H1 (cell line): ENCODE measurements at regions of chr1 and their contacts with region 1.

Region 1: GRCh38 chr1:19762175-19762779 is 37.4 kb downstream of the TMCO4 start:
- DNase-seq: peak in 1 of 2 experiments; percentile 84
- H3K4me3 ChIP-seq: no peak overlapping the region
- H3K27ac ChIP-seq: no peak overlapping the region
- H3K4me1 ChIP-seq: no peaks in the 10 kb centered on the region
- H3K27me3 ChIP-seq: no peaks in the 10 kb centered on the region
- CTCF ChIP-seq: peak; percentile 86 to 93 (median 92)
- EP300 ChIP-seq: no peak
- POLR2A ChIP-seq: no peak
- RAD21 ChIP-seq: peak; percentile 86 to 89

Region 2: GRCh38 chr1:19704247-19705113 is 57.8 kb before region 1 on chr1:
- CTCF ChIA-PET with region 1: interaction called, 11 read pairs
- POLR2A ChIA-PET with region 1: no interaction called
- DNase-seq: peak; percentile 69 to 95
- H3K4me3 ChIP-seq: peak overlapping the region in 1 of 4 experiments; percentile 41; a peak in 2 of 8 replicates
- H3K27ac ChIP-seq: no peak overlapping the region
- H3K4me1 ChIP-seq: peaks cover 0 to 8% (median 3%) of the 10 kb centered on the region in 4 experiments; a peak in 5 of 7 replicates
- H3K27me3 ChIP-seq: no peaks in the 10 kb centered on the region
- CTCF ChIP-seq: peak; percentile 92 to 95 (median 94)
- EP300 ChIP-seq: no peak
- POLR2A ChIP-seq: no peak
- RAD21 ChIP-seq: peak; percentile 66 to 78

Region 3: DNA sequence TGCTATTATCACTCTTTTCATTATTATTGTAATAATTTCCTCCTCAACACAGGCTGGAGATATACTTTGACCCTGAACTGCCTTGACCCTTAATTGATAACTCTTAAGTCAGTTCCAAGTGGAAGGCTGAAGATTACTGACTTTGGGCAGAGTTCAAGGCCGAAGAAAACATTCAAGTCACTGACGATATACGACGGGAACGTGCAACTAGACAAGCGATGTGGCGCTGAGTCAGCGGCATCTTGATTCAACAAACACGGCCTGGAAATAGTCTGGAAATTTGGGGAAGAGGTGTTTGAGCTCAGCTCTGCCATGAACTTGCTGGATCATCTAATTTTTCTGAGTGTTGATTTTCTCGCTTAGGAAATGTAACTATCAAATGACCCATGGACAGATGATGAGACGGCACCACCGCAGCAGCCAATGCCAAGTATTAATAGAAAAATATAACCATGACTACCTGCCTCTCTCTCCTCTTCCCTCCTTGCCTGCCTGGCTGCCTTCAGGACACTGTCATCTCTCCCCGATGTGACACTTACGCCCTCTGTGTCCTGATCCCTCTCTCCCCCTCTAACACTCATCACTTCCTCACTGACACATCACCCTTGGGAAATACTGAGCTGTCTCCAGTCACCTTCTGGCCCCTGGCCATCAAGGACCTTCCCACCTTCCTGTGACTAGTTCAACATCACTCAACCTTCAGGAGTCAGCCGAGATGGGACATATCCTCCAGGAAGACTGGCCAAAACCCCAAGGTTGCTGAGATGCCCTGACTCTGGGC is 12.0 kb before region 1 on chr1:
- CTCF ChIA-PET with region 1: interaction called, 11 read pairs
- POLR2A ChIA-PET with region 1: no interaction called
- DNase-seq: no peak
- H3K4me3 ChIP-seq: no peak overlapping the region
- H3K27ac ChIP-seq: no peak overlapping the region
- H3K4me1 ChIP-seq: no peaks in the 10 kb centered on the region
- H3K27me3 ChIP-seq: no peaks in the 10 kb centered on the region
- CTCF ChIP-seq: no peak
- EP300 ChIP-seq: no peak
- POLR2A ChIP-seq: no peak
- RAD21 ChIP-seq: no peak

Region 4: DNA sequence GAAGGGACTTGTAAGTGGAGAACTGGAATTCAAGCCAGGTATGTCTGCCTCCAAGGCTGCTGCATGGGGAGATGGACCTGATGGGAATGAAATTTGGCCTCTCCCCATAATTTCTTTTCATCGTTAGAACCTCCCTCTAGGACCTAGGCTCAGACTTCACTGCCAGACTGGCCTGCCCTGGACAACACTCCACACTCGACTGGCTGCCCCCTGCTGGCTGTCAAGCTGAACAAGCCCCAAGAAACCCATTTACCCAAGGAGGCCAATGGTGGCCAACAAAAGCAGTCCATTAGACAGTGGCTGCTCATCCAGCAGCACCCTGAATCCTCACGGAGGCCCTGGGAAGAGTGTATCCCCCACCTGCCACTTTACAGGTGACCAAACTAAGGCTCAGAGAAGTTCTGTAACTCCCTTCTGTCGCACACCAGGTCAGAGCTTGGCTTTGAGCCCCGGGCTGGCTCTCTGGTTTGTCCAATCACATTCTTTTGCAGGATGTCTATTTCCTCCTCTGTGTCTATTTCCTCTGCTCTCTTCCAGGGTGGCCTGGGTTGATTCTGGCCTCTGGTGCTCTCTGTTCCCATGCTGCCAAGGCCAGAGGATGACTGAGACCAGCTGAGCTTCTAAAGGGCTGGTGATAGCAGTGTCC is 49.1 kb after region 1 on chr1:
- CTCF ChIA-PET with region 1: interaction called, 14 read pairs
- POLR2A ChIA-PET with region 1: interaction called, 3 read pairs
- DNase-seq: peak in 1 of 2 experiments; percentile 75
- H3K4me3 ChIP-seq: no peak overlapping the region
- H3K27ac ChIP-seq: no peak overlapping the region
- H3K4me1 ChIP-seq: peaks cover 6 to 9% (median 7%) of the 10 kb centered on the region in 4 experiments
- H3K27me3 ChIP-seq: no peaks in the 10 kb centered on the region
- CTCF ChIP-seq: peak; percentile 81 to 84 (median 81)
- EP300 ChIP-seq: no peak
- POLR2A ChIP-seq: no peak
- RAD21 ChIP-seq: peak; percentile 55 to 75

Region 5: DNA sequence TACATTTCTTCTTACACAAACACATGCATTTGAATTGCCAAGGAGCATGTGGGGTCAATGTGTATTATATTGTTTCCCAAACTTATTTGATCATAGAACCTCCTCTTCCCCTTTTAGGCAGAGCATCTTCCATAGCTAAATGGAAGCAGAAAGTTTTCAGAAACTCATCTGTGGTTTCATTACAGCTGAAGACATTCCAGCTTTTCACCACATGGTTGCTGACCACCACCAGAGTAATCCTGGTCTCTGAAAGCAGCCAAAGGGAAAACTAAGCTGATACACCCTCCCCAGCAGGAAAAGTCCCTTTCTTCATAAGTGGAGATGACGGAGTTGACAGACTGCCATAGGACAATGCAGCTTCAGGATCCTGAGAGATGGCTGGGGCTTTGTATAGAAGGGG is 89.8 kb after region 1 on chr1:
- CTCF ChIA-PET with region 1: no interaction called
- POLR2A ChIA-PET with region 1: no interaction called
- DNase-seq: no peak
- H3K4me3 ChIP-seq: no peak overlapping the region
- H3K27ac ChIP-seq: no peak overlapping the region
- H3K4me1 ChIP-seq: no peaks in the 10 kb centered on the region
- H3K27me3 ChIP-seq: peaks cover 0 to 2% (median 0%) of the 10 kb centered on the region in 4 experiments; a peak in 2 of 7 replicates
- CTCF ChIP-seq: no peak
- EP300 ChIP-seq: no peak
- POLR2A ChIP-seq: no peak
- RAD21 ChIP-seq: no peak

Region 6: GRCh38 chr1:19882111-19883071 is 120.1 kb after region 1 on chr1 and contains the start of gene OTUD3:
- CTCF ChIA-PET with region 1: interaction called, 12 read pairs
- POLR2A ChIA-PET with region 1: interaction called, 4 read pairs
- DNase-seq: peak; percentile 89 to 93
- H3K4me3 ChIP-seq: peak within 1 kb of the TSS; percentile 65 to 85 (median 81)
- H3K27ac ChIP-seq: peak within 1 kb of the TSS; percentile 77
- H3K4me1 ChIP-seq: peaks cover 0 to 3% (median 3%) of the 10 kb centered on the region in 4 experiments; a peak in 3 of 7 replicates
- H3K27me3 ChIP-seq: no peaks in the 10 kb centered on the region
- CTCF ChIP-seq: peak; percentile 70 to 86 (median 72)
- EP300 ChIP-seq: no peak
- POLR2A ChIP-seq: peak; percentile 63 to 82
- RAD21 ChIP-seq: peak; percentile 40 to 66
- total RNA-seq, gene OTUD3: 11.9 and 12.7 TPM in 2 replicates